Motor neuron (in vitro differentiated cells): ENCODE measurements at regions of chr11 and their contacts with region 1.

Region 1: DNA sequence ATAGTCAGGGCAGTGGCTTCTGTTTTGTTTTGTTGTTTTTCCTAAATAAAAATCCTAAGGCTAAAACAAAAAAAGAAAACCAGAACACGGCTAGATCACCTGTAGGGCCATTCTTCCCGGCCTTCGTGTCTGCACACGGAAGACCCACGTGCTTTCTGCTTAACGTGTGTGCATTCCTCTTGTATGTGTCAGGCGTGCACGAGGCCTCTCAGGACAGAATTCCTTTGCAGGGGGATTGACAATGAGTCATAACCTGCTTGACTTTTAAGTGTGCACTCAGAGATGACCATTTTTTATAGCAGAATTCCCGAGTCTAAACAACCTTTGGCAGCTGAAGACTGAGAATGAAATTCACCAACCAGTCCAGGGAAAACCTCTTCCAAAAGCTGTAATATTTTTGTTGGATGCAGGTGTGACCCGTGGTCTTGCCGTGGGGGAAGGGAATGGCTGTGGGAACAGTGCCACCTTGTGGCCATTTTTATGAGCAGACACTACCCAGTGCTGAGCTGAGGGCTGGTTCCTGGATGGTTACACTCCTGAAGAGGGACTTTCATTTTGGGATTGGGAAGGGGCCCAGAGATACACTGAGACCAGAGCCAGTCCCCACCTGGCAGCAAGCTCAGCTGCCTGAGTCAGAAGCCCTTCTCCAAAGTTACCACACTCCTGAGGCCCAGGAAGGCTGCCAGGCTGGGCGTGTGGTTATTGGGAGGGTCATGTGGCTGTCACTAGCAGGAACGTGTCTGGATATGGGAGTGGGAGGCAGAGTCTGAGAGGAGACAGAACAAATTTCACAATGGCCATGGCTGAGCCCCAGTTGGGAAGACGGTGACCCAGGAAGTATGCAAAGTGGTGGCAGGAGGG is 35.8 kb upstream of the DKK3 start:
- ATAC-seq: peak; percentile 79 to 96 (median 93)
- H3K4me3 ChIP-seq: no peak overlapping the region
- H3K27ac ChIP-seq: no peak overlapping the region
- H3K4me1 ChIP-seq: peaks cover 0 to 4% of the 10 kb centered on the region in 2 donors

Region 2: DNA sequence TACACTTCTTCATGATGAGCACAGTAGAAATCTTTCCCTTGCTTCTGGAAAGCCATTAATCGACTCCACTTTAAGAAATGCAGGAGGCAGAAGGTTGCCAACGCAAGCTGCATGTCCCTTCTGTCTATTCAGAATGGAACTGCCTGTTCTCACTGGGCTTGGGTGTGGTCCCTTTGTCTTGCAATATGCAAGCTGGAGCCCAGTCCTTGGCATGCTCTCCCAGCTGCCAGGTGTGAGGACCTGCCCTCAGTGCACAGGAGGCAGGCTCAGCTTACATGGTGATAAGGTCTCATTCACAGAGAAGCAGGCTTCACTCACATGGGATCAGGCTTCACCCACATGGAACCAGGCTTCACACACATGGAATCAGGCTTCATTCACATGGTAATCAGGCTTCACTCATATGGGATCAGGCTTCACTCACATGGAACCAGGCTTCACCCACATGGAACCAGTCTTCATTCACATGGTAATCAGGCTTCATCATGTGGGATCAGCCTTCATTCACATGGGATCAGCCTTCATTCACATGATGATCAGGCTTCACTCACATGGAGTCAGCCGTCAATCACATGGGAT is 261.6 kb before region 1 on chr11:
- in situ Hi-C with region 1: no loop called
- ATAC-seq: peak in 4 of 8 experiments; percentile 9 to 95 (median 91)
- H3K4me3 ChIP-seq: no peak overlapping the region
- H3K27ac ChIP-seq: no peak overlapping the region
- H3K4me1 ChIP-seq: peaks cover 0 to 2% of the 10 kb centered on the region in 2 donors

Region 3: GRCh38 chr11:11806586-11806985 is 237.6 kb before region 1 on chr11:
- in situ Hi-C with region 1: loop called in 5 of 9 experiments (anchors 10 to 25 kb)
- ATAC-seq: no peak
- H3K4me3 ChIP-seq: no peak overlapping the region
- H3K27ac ChIP-seq: no peak overlapping the region
- H3K4me1 ChIP-seq: no peaks in the 10 kb centered on the region

Region 4: DNA sequence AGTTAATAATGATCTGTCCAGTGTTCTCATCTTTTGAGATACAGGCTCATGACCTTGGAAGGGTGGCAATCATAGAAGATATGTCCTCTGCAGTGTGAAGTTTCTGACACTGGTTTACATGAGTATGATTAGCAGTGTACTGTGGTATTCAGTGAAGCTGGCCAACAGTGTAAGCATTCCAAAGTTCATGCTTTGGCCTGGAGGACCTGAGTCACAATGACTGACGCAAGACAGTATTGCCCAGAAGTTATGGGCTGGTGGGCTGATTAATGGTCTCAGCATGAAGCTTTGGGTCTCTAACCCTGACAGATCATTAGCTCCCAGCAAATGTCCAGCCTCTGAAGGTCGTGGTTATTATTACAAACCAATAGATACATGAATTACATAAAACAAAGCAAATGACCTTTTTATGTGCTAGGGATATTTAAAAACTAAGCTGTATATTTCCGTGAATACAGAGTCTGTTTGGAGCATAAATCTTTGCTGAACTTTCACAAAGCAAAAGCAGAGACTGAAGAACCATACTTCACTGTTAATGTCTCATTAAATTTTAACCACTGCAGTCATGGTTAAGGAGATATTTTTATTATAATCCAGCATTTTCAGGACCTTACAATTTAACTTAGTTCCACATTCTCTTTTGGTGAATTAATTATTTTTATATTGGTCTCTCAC is 230.8 kb before region 1 on chr11:
- in situ Hi-C with region 1: loop called in 5 of 9 experiments (anchors 10 to 25 kb)
- ATAC-seq: peak in 3 of 8 experiments; percentile 45 to 100 (median 98)
- H3K4me3 ChIP-seq: no peak overlapping the region
- H3K27ac ChIP-seq: no peak overlapping the region
- H3K4me1 ChIP-seq: no peaks in the 10 kb centered on the region

Region 5: DNA sequence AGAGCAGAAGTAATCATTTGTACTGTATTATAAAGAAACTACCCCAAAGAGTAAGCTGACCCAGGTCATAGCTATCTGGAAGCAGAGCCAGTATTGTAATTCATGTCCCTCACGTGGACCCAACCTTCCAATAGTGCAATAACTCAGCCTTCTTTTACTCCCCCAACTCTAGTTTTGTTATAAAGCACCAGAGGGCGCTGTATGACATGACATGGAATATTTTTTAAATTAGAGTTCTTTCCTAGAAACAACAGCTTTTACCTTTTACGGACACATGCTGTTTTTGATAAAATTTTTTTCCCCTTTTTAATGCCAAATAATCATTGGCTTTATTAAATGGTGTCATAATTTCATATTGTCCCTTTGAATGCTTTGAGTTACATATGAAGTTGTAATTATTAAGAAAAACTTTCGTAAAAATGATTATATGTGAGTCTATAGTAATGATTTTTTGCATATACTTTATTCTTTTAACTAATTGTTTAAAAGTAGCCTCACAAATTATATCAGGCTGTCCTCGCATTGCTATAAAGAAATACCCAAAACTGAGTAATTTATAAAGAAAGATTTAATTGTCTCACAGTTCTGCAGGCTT is 112.6 kb before region 1 on chr11:
- in situ Hi-C with region 1: loop called in 1 of 9 experiments (anchors 25 kb)
- ATAC-seq: peak in 5 of 8 experiments; percentile 43 to 88 (median 72)
- H3K4me3 ChIP-seq: no peak overlapping the region
- H3K27ac ChIP-seq: no peak overlapping the region
- H3K4me1 ChIP-seq: no peaks in the 10 kb centered on the region

Region 6: GRCh38 chr11:12274558-12275197 is 230.5 kb after region 1 on chr11:
- in situ Hi-C with region 1: loop called in 1 of 9 experiments (anchors 10 kb)
- ATAC-seq: peak in 4 of 8 experiments; percentile 81 to 93 (median 86)
- H3K4me3 ChIP-seq: no peak overlapping the region
- H3K27ac ChIP-seq: no peak overlapping the region
- H3K4me1 ChIP-seq: peaks cover 0 to 3% of the 10 kb centered on the region in 2 donors

Region 7: DNA sequence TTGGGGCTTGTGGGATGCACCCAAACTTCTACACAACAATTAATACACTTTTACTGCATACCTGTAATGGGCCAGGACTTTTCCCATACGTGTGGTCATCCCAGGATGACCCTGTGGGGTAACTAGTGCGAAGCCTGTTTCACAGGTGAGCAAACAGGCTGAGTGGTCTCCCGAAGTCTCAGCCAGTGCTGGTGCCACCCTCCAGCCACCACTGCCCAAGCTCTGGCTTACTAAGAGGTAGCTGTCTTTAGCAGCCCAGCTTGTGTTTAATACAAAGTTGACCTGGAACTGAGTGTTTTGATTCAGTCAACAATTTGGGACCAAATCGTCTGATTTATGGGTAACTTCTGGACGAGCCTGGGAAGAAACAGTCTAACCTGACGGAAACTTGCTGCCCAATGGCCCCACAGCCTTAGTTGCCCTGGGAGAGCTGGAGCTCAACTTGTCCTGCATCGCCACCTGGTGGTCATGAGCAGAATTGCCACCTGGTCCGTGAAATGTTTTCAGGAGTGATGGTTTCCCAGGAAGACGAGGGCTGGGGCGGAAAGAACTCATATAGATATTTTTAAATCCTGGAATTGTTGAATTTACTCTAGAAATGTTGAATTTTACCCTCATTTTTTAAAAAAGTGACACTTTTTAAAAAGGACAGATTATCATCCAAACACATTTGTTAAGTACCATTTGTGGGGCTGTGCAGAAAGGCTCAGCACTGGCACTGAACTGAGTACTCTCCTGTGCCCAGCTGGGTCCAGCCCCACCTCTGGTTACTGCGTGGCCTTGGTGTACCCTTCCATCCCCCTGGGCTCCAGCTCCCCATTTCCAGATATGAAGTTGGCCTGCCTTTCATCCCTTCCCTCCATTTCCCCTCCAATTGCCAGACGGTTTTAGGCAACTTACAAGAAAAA is 237.6 kb after region 1 on chr11:
- in situ Hi-C with region 1: loop called in 4 of 9 experiments (anchors 5 to 10 kb)
- ATAC-seq: peak; percentile 25 to 84 (median 66)
- H3K4me3 ChIP-seq: no peak overlapping the region
- H3K27ac ChIP-seq: no peak overlapping the region
- H3K4me1 ChIP-seq: no peaks in the 10 kb centered on the region